ENCODE measurements at regions of chr3 and their contacts with region 1.

Region 1: GRCh38 chr3:192444096-192444790 is 283.1 kb downstream of the FGF12 start:
- DNase-seq: peak in 6 of 9 experiments; percentile 5 to 41 (median 24)
- ATAC-seq: no peak
- H3K4me3 ChIP-seq: no peak overlapping the region
- H3K4me3 Mint-ChIP-seq: no peak overlapping the region
- H3K27ac ChIP-seq: no peak overlapping the region
- H3K27ac Mint-ChIP-seq: no peak overlapping the region
- H3K4me1 ChIP-seq: no peaks in the 10 kb centered on the region
- H3K4me1 Mint-ChIP-seq: no peaks in the 10 kb centered on the region
- H3K27me3 ChIP-seq: no peaks in the 10 kb centered on the region
- H3K27me3 Mint-ChIP-seq: peaks cover 10% of the 10 kb centered on the region
- CTCF ChIP-seq: peak; percentile 66

Region 2: DNA sequence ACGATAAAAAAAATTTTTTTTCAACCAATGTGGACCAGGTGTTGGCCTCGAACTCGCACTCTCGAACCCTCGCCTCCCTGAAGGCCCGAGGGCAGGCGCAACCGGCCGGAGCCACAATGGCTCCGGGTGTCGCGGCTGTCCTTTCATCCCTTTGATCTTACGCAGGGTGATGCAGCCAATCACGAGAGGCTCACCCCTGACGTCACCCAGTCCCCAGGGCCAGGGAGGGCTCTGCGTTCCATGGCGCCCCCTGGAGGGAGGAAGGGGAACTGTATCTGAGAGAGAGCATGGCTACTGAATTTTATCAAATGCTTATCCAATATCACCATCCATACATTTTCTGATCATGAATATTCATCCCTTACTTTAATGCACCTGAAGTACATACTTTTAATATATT is 1566.3 kb before region 1 on chr3:
- CTCF ChIA-PET with region 1: no interaction called
- POLR2A ChIA-PET with region 1: no interaction called
- intact Hi-C with region 1: loop called in 1 of 2 experiments (anchors 5 kb)
- DNase-seq: no peak
- ATAC-seq: no peak
- H3K4me3 ChIP-seq: no peak overlapping the region
- H3K4me3 Mint-ChIP-seq: no peak overlapping the region
- H3K27ac ChIP-seq: no peak overlapping the region
- H3K27ac Mint-ChIP-seq: no peak overlapping the region
- H3K4me1 ChIP-seq: no peaks in the 10 kb centered on the region
- H3K4me1 Mint-ChIP-seq: no peaks in the 10 kb centered on the region
- H3K27me3 ChIP-seq: no peaks in the 10 kb centered on the region
- H3K27me3 Mint-ChIP-seq: no peaks in the 10 kb centered on the region
- CTCF ChIP-seq: no peak

Region 3: DNA sequence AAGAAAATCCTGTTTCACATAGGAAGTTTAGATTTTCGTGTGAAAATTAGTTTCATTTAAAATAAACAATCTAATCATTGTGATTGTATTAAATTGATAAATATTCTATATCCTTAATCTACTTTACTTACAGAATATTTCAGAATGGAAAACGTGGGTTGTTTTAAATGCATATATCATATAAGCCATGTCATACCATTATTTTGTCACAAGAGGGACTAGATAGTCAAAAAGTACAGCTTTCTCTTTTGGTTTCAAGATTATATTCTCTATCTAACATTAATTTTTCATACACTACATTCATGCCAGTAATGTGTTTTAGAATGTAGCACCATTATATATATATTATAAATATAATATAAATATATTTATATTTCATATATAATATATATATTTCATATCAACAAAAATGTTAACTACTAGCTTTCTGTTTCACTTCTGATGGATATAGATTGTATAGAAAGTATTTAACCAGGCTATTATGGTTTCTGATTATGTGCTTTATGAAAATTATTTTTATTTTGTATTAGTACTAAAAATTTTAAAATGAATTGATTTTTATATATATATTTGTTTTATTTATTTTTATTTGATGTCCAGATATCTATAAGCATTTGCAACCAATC is 1199.9 kb before region 1 on chr3:
- CTCF ChIA-PET with region 1: no interaction called
- POLR2A ChIA-PET with region 1: no interaction called
- intact Hi-C with region 1: loop called in 1 of 2 experiments (anchors 5 kb)
- DNase-seq: peak in 1 of 9 experiments; percentile 3
- ATAC-seq: no peak
- H3K4me3 ChIP-seq: no peak overlapping the region
- H3K4me3 Mint-ChIP-seq: no peak overlapping the region
- H3K27ac ChIP-seq: no peak overlapping the region
- H3K27ac Mint-ChIP-seq: no peak overlapping the region
- H3K4me1 ChIP-seq: no peaks in the 10 kb centered on the region
- H3K4me1 Mint-ChIP-seq: peaks cover 2% of the 10 kb centered on the region
- H3K27me3 ChIP-seq: no peaks in the 10 kb centered on the region
- H3K27me3 Mint-ChIP-seq: no peaks in the 10 kb centered on the region
- CTCF ChIP-seq: no peak

Region 4: DNA sequence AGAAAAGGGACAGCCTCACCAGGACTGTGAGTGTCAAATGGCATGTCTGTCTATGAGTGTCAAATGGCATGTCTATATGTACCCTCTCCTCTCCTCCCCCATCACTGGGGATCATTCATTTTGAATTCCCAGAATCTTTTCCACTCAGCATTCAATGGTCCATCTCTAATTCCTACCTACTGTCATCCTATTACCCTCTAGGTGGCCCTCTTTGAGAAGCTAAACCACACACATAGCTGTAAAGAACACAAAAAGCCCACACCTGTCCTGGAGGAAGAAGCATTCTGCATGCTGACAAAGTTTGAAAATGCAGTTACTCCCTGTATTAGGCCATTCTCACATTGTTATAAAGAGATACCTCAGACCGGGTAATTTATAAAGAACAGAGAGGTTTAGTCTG is 1029.5 kb before region 1 on chr3:
- CTCF ChIA-PET with region 1: no interaction called
- POLR2A ChIA-PET with region 1: no interaction called
- intact Hi-C with region 1: loop called in 1 of 2 experiments (anchors 5 kb)
- DNase-seq: no peak
- ATAC-seq: no peak
- H3K4me3 ChIP-seq: no peak overlapping the region
- H3K4me3 Mint-ChIP-seq: no peak overlapping the region
- H3K27ac ChIP-seq: no peak overlapping the region
- H3K27ac Mint-ChIP-seq: no peak overlapping the region
- H3K4me1 ChIP-seq: no peaks in the 10 kb centered on the region
- H3K4me1 Mint-ChIP-seq: no peaks in the 10 kb centered on the region
- H3K27me3 ChIP-seq: no peaks in the 10 kb centered on the region
- H3K27me3 Mint-ChIP-seq: no peaks in the 10 kb centered on the region
- CTCF ChIP-seq: no peak

Measured in CD8-positive, alpha-beta T cell (primary cell).